ENCODE measurements at regions of chr20 and their contacts with region 1.

Region 1: GRCh38 chr20:47392015-47392720 is 35.7 kb upstream of the ZMYND8 start:
- DNase-seq: peak; percentile 59 to 89 (median 78)
- H3K4me3 ChIP-seq: no peak overlapping the region
- H3K27ac ChIP-seq: peak overlapping the region in 3 of 5 donors; percentile 66 to 86 (median 83)
- H3K4me1 ChIP-seq: peaks cover under 1 to 12% of the 10 kb centered on the region in 2 donors
- H3K27me3 ChIP-seq: no peaks in the 10 kb centered on the region
- CTCF ChIP-seq: no peak
- POLR2A ChIP-seq: peak in 1 of 2 donors; percentile 32

Region 2: DNA sequence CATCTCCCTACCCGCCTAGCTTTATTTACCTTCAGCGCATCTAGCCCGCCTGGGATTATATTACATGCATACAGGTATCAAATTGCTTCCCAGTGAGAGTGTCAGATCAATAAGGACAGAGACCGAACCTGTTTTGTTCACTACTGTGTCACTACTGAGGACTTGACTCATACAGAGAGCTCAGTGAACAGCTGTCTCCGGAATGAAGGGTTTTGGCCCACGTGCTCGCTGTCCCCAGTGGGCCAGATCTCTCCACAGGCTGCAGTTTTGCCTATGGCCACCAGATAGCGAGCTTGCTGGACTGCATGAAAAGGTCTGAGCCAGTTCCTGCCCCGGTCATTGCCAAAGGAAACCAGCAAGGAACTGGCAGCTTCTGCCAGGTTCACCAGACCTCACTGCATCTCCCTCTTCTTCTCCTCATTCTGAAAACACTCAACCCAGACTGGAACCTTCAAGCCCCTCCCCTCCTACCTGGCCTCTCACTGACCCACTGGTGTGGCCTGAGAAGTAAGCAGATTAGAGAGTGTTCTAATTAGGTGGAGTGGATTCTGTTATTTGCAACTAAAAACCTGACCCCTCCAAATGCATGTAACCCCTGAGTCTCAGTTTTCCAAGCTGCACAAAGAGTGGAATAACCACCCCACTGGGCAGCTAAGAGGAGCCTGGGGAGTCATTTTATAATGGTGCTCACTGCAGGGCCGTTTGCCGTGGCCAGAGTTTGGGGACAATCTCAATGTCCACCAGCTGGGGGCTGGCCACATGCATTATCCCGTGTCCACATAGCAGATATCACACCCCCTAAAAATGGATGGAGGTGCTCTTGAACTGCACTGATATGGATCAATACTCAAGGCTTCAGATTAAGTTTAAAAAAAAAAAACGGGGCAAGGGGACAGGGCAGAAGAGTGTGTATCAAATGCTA is 186.3 kb before region 1 on chr20:
- intact Hi-C with region 1: loop called (anchors 5 to 10 kb)
- DNase-seq: peak in 6 of 7 donors; percentile 71 to 87 (median 76)
- H3K4me3 ChIP-seq: no peak overlapping the region
- H3K27ac ChIP-seq: no peak overlapping the region
- H3K4me1 ChIP-seq: no peaks in the 10 kb centered on the region
- H3K27me3 ChIP-seq: no peaks in the 10 kb centered on the region
- CTCF ChIP-seq: peak; percentile 11 to 97 (median 57)
- POLR2A ChIP-seq: no peak

Region 3: DNA sequence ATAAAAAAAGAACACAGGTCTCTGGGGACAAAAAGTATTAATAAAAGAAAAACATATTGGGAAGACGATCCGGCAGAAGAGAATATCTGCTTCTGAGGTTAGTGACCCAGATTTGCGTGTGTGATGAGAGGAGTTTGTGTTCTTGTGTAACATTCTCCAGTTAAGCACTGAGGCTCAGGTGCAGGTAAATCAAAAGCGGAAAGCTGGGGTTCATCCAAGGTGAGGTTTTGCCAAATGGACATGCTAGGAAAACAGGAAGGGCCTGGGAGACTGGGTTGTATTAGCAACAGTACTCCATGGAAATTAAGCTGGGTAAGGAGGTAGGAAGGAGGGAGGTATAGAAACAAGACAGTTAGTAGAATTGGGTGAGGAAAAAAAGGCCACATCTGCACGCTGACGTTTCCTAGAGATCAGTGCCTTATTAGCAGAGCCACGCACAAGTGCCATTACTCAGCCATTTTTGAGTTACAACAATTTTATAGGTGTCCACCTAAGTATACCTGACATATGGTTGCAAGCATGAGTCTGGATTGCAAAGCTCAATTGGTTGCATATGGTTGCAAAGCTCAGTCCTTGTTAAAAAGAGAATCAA is 175.3 kb before region 1 on chr20:
- intact Hi-C with region 1: loop called in 1 of 2 experiments (anchors 10 kb)
- DNase-seq: no peak
- H3K4me3 ChIP-seq: no peak overlapping the region
- H3K27ac ChIP-seq: no peak overlapping the region
- H3K4me1 ChIP-seq: peaks cover 0 to 7% of the 10 kb centered on the region in 2 donors
- H3K27me3 ChIP-seq: no peaks in the 10 kb centered on the region
- CTCF ChIP-seq: no peak
- POLR2A ChIP-seq: no peak

Region 4: DNA sequence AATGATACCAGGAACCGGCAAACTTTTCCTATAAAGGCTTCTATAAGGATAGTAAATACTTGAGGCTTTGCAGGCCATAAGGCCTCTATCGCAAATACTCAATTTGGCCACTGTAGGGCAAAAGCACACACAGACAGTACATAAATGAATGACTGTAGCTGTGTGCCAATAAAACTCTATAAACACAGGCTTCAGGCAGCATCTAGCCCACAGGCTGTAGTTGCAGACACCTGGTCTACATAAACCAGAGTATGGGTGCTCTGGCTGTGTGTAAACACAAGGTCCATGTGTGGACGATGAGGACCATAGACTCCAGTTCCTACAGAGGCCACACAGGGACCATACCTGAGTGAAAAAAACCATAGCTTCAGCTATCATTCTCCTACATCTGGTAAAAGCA is 87.9 kb before region 1 on chr20:
- intact Hi-C with region 1: no loop called
- DNase-seq: no peak
- H3K4me3 ChIP-seq: no peak overlapping the region
- H3K27ac ChIP-seq: peak overlapping the region; percentile 18 to 81 (median 72)
- H3K4me1 ChIP-seq: peaks cover 24 to 46% of the 10 kb centered on the region in 2 donors
- H3K27me3 ChIP-seq: no peaks in the 10 kb centered on the region
- CTCF ChIP-seq: peak in 3 of 6 experiments; percentile 7 to 32 (median 16)
- POLR2A ChIP-seq: no peak

Region 5: DNA sequence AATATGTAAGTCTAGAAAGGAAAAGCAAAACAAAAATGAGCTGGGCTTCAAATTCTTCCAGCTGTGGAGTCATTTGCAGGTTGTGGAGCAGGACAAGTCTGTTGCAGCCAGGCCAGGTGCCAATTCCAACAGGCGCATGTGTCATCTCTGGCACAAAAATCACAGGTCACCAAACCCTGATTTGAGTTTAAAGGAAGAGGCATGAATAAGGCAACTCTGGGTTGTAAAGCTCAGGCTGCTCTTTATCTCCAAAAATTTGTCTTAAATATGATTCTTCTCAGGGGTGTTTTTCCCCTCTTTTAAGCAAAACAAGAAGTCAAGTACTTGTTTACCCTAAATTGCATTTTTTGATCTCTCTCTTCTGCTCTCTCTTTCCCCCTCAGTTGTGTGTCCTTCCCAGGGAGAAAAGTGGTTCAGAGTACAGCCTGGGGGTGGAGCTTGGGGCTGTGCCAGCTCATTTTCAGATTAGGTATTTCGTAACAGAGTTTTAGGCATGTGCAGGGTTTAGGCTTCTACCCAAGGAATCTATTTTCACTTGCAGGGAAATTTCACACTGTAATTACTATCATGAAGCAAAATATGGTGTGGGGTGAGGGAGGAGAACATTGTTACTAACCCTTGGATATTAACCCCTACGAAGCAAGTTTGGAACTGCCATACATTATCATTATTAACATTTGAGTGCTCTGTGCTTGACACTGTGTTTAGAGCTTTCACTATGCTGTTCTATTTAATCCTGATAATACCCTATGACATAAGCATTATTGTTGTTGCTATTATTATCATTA is 101.2 kb after region 1 on chr20:
- intact Hi-C with region 1: loop called in 1 of 2 experiments (anchors 10 kb)
- DNase-seq: peak; percentile 86 to 95 (median 91)
- H3K4me3 ChIP-seq: peak overlapping the region in 1 of 4 donors; percentile 31
- H3K27ac ChIP-seq: peak overlapping the region; percentile 2 to 85 (median 56)
- H3K4me1 ChIP-seq: peaks cover 15 to 16% of the 10 kb centered on the region in 2 donors
- H3K27me3 ChIP-seq: no peaks in the 10 kb centered on the region
- CTCF ChIP-seq: no peak
- POLR2A ChIP-seq: peak in 1 of 2 donors; percentile 48